Posterior cingulate gyrus (tissue), 11 donors: ENCODE measurements at regions of chr18 and their contacts with region 1.

Region 1: GRCh38 chr18:13565228-13565627 is 161.1 kb downstream of the FAM210A start:
- DNase-seq: peak; percentile 87 to 99 (median 94)

Region 2: GRCh38 chr18:13611601-13612195 is 46.5 kb after region 1 on chr18:
- intact Hi-C with region 1: loop called (anchors 1 kb)
- DNase-seq: peak in 9 of 10 donors; percentile 57 to 95 (median 72)